HepG2 (cell line): ENCODE measurements at regions of chr5 and their contacts with region 1.

Region 1: DNA sequence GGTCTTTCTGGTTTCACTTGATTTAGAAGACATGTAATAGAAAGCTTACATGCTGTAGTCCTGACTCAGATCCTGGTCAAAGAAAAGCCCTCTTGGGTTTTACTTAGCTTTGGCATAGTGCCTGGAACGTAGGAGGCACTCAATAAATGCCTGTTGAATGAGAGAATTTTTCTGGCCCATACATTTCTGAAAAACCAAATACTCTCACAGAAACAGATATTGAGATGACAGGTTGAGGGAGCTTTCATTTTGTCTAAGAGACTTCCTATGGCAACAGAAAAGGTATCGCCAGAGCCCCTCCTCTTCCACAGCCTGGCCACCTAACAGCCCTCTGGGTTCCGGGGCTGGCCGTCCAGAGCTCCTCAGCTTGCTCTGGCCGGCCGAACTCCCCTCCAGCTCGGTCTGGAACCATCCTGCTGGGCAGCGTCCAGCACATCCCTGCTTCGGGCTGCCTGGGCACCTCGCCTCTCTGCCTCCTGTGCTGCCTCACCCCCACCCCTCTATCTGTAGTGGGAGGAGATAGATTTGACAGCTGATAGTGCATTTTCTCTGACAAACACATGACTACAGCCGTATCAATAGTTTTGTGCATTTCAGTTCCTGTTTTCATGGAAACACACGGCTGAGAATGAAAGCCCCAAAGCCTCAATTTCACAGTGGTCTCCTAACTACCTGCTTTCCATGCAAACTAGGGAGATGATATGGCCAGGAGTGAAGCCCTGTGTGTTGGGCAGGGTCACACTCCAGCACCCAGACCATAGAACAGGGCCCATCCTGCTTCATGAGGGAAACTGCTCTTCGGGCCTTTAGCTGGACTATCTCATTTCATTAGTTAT is 1.1 kb downstream of the IL4 start:
- DNase-seq: peak; percentile 24
- ATAC-seq: peak; percentile 73
- H3K4me3 ChIP-seq: peak overlapping the region in 2 of 3 experiments; percentile 23 to 36; a peak in 3 of 6 replicates
- H3K27ac ChIP-seq: no peak overlapping the region
- H3K4me1 ChIP-seq: peaks cover 27% of the 10 kb centered on the region
- H3K27me3 ChIP-seq: peaks cover 1 to 11% of the 10 kb centered on the region in 2 experiments; a peak in 3 of 5 replicates
- CTCF ChIP-seq: no peak
- EP300 ChIP-seq: no peak
- POLR2A ChIP-seq: no peak
- RAD21 ChIP-seq: no peak

Region 2: GRCh38 chr5:132386644-132387286 is 288.1 kb before region 1 on chr5:
- CTCF ChIA-PET with region 1: interaction called, 7 read pairs
- POLR2A ChIA-PET with region 1: no interaction called
- in situ Hi-C with region 1: loop called (anchors 25 kb)
- intact Hi-C with region 1: loop called (anchors 5 kb)
- DNase-seq: peak; percentile 56
- ATAC-seq: peak; percentile 93
- H3K4me3 ChIP-seq: no peak overlapping the region
- H3K27ac ChIP-seq: no peak overlapping the region
- H3K4me1 ChIP-seq: peaks cover 44% of the 10 kb centered on the region
- H3K27me3 ChIP-seq: no peaks in the 10 kb centered on the region
- CTCF ChIP-seq: peak; percentile 97
- EP300 ChIP-seq: no peak
- POLR2A ChIP-seq: no peak
- RAD21 ChIP-seq: peak; percentile 95

Region 3: GRCh38 chr5:132612846-132613245 is 62.0 kb before region 1 on chr5:
- CTCF ChIA-PET with region 1: no interaction called
- POLR2A ChIA-PET with region 1: no interaction called
- in situ Hi-C with region 1: no loop called
- intact Hi-C with region 1: loop called (anchors 10 kb)
- DNase-seq: no peak
- ATAC-seq: peak; percentile 64
- H3K4me3 ChIP-seq: no peak overlapping the region
- H3K27ac ChIP-seq: no peak overlapping the region
- H3K4me1 ChIP-seq: no peaks in the 10 kb centered on the region
- H3K27me3 ChIP-seq: no peaks in the 10 kb centered on the region
- CTCF ChIP-seq: no peak
- EP300 ChIP-seq: no peak
- POLR2A ChIP-seq: no peak
- RAD21 ChIP-seq: no peak